ENCODE measurements at regions of chr6 and their contacts with region 1.

Region 1: DNA sequence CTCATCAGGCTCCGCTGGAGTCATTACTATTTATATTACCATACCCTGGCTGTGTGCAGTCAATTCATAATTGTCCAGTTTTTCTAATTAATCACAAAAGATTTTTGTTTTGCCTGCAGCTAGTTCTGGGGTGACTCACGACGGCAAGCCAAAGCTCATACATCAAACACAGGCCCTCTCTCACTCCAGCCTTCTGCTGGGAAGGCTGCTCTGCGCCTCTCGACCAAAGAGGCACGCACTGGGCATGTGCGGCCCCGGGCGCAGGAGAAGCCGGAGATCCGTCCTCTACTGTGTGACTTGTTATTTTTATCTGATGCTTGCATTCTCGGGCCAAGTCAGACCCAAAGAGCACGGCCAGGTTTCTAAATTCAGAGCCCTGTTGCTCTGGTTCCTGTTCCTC is 98.5 kb downstream of the TFAP2A start:
- DNase-seq: peak; percentile 84 to 85
- H3K4me3 ChIP-seq: peak overlapping the region in 2 of 3 donors; percentile 17 to 34
- H3K27ac ChIP-seq: peak overlapping the region; percentile 83 to 89
- H3K4me1 ChIP-seq: peaks cover 0 to 6% of the 10 kb centered on the region in 2 donors
- H3K27me3 ChIP-seq: no peaks in the 10 kb centered on the region
- CTCF ChIP-seq: no peak
- POLR2A ChIP-seq: no peak

Region 2: GRCh38 chr6:8888468-8888867 is 1427.9 kb before region 1 on chr6:
- intact Hi-C with region 1: loop called (anchors 10 kb)
- DNase-seq: no peak
- H3K4me3 ChIP-seq: no peak overlapping the region
- H3K27ac ChIP-seq: no peak overlapping the region
- H3K4me1 ChIP-seq: no peaks in the 10 kb centered on the region
- H3K27me3 ChIP-seq: no peaks in the 10 kb centered on the region
- CTCF ChIP-seq: no peak
- POLR2A ChIP-seq: no peak

Region 3: DNA sequence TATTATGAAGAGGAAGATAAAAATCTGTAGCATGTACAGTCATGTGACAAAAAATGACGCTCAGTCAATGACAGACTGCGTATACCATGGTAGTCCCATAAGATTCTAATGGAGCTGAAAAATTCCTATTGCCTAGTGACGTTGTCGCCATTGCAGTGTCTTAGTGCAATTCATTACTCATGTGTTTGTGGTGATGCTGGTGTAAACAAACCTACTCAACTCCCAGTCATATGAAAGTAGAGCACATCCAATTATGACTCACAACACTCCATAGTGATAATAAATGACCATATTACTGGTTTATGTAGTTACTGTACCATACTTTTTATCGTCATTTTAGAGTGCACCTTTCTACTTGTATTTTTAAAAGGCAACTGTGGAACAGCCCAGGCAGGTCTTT is 53.6 kb after region 1 on chr6:
- intact Hi-C with region 1: no loop called
- DNase-seq: no peak
- H3K4me3 ChIP-seq: no peak overlapping the region
- H3K27ac ChIP-seq: no peak overlapping the region
- H3K4me1 ChIP-seq: no peaks in the 10 kb centered on the region
- H3K27me3 ChIP-seq: no peaks in the 10 kb centered on the region
- CTCF ChIP-seq: no peak
- POLR2A ChIP-seq: no peak